ENCODE measurements at regions of chr2 and their contacts with region 1.

Region 1: GRCh38 chr2:172931918-172932520 is 143.6 kb upstream of the MAP3K20 start:
- DNase-seq: peak; percentile 50
- H3K4me3 ChIP-seq: no peak overlapping the region
- H3K27ac ChIP-seq: peak overlapping the region in 1 of 2 experiments; percentile 95; a peak in 2 of 4 replicates
- H3K4me1 ChIP-seq: peaks cover 0 to 32% of the 10 kb centered on the region in 2 experiments; a peak in 2 of 4 replicates
- H3K27me3 ChIP-seq: no peaks in the 10 kb centered on the region
- CTCF ChIP-seq: peak; percentile 78
- EP300 ChIP-seq: no peak
- RAD21 ChIP-seq: peak; percentile 87

Region 2: GRCh38 chr2:172768401-172768800 is 163.6 kb before region 1 on chr2:
- CTCF ChIA-PET with region 1: no interaction called
- POLR2A ChIA-PET with region 1: no interaction called
- DNase-seq: no peak
- H3K4me3 ChIP-seq: no peak overlapping the region
- H3K27ac ChIP-seq: no peak overlapping the region
- H3K4me1 ChIP-seq: no peaks in the 10 kb centered on the region
- H3K27me3 ChIP-seq: 0 out of 2 replicates have a peak, but pooled peaks cover 1% of the 10 kb centered on the region
- CTCF ChIP-seq: no peak
- EP300 ChIP-seq: no peak
- RAD21 ChIP-seq: no peak

Region 3: DNA sequence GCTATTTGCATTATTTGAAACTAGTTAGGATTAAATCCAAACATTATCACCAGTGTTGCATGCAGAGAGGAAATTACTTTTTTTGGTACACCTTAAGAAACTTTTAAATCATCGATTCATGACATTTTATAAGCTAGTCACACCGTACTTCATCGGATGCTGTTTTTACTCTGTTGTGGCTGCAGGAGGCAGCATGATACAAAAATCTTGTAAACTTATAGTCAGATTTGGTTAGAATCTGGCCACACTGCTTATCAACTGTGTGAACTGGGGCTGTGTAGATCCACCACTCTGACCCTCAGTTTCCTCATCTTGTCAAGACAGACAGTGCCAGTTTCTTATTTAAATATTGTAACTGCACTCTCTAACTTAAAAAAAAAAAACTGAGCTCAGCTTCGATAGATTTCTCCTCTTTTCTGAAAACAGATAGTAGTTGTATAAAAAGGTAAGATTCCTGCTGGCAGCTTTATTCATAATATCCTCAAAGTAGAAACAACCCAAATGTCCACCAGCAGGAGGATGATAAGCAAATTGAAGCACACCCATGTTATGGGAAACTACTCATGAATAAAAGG is 118.6 kb before region 1 on chr2:
- CTCF ChIA-PET with region 1: interaction called, 181 read pairs
- POLR2A ChIA-PET with region 1: interaction called, 4 read pairs
- DNase-seq: peak; percentile 33
- H3K4me3 ChIP-seq: no peak overlapping the region
- H3K27ac ChIP-seq: peak overlapping the region in 1 of 2 experiments; percentile 89; a peak in 2 of 4 replicates
- H3K4me1 ChIP-seq: peaks cover 0 to 32% of the 10 kb centered on the region in 2 experiments; a peak in 2 of 4 replicates
- H3K27me3 ChIP-seq: no peaks in the 10 kb centered on the region
- CTCF ChIP-seq: peak; percentile 63
- EP300 ChIP-seq: 0 out of 4 replicates have a peak, but pooled peaks of 1 of the 2 experiments have one; percentile 5
- RAD21 ChIP-seq: peak; percentile 92

Region 4: GRCh38 chr2:172855588-172855987 is 76.4 kb before region 1 on chr2:
- CTCF ChIA-PET with region 1: interaction called, 98 read pairs
- POLR2A ChIA-PET with region 1: interaction called, 4 read pairs
- DNase-seq: no peak
- H3K4me3 ChIP-seq: no peak overlapping the region
- H3K27ac ChIP-seq: no peak overlapping the region
- H3K4me1 ChIP-seq: peaks cover 1 to 20% of the 10 kb centered on the region in 2 experiments; a peak in 2 of 4 replicates
- H3K27me3 ChIP-seq: no peaks in the 10 kb centered on the region
- CTCF ChIP-seq: no peak
- EP300 ChIP-seq: no peak
- RAD21 ChIP-seq: no peak

Region 5: DNA sequence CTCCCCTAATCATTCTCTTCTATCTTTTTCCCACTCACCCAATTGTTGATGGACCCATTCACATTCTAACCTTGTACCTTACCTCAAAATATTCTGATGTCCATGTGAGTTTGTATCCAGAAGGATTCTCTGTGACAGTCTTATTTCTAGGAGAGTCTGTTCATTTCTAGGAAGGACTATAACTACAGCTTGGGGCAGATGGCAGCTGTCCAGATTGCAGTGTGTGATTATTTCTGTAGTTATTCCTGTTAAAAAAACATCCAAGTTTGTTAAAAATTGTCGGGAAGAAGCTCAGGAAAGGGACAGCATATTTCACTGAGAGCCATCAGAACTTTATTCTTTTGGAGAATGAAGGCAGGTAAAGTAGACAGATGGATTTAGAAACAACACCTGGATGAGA is 53.8 kb before region 1 on chr2:
- CTCF ChIA-PET with region 1: interaction called, 30 read pairs
- POLR2A ChIA-PET with region 1: no interaction called
- DNase-seq: no peak
- H3K4me3 ChIP-seq: no peak overlapping the region
- H3K27ac ChIP-seq: no peak overlapping the region; a peak in 1 of 4 replicates
- H3K4me1 ChIP-seq: peaks cover 0 to 4% of the 10 kb centered on the region in 2 experiments; a peak in 2 of 4 replicates
- H3K27me3 ChIP-seq: no peaks in the 10 kb centered on the region
- CTCF ChIP-seq: no peak
- EP300 ChIP-seq: no peak
- RAD21 ChIP-seq: no peak

Region 6: GRCh38 chr2:172905937-172906811 is 25.8 kb before region 1 on chr2:
- CTCF ChIA-PET with region 1: interaction called, 69 read pairs
- POLR2A ChIA-PET with region 1: no interaction called
- DNase-seq: peak; percentile 64
- H3K4me3 ChIP-seq: no peak overlapping the region
- H3K27ac ChIP-seq: peak overlapping the region in 1 of 2 experiments; percentile 95; a peak in 2 of 4 replicates
- H3K4me1 ChIP-seq: peaks cover 0 to 33% of the 10 kb centered on the region in 2 experiments; a peak in 2 of 4 replicates
- H3K27me3 ChIP-seq: no peaks in the 10 kb centered on the region
- CTCF ChIP-seq: no peak
- EP300 ChIP-seq: peak in 1 of 2 experiments; percentile 52; a peak in 2 of 4 replicates
- RAD21 ChIP-seq: peak; percentile 36

Region 7: GRCh38 chr2:172944022-172944793 is 12.2 kb after region 1 on chr2:
- CTCF ChIA-PET with region 1: interaction called, 14 read pairs
- POLR2A ChIA-PET with region 1: no interaction called
- DNase-seq: no peak
- H3K4me3 ChIP-seq: no peak overlapping the region
- H3K27ac ChIP-seq: no peak overlapping the region
- H3K4me1 ChIP-seq: peaks cover 0 to 2% of the 10 kb centered on the region in 2 experiments; a peak in 2 of 4 replicates
- H3K27me3 ChIP-seq: no peaks in the 10 kb centered on the region
- CTCF ChIP-seq: no peak
- EP300 ChIP-seq: no peak
- RAD21 ChIP-seq: no peak

Region 8: GRCh38 chr2:173021939-173022371 is 89.9 kb after region 1 on chr2:
- CTCF ChIA-PET with region 1: interaction called, 17 read pairs
- POLR2A ChIA-PET with region 1: no interaction called
- DNase-seq: peak; percentile 30
- H3K4me3 ChIP-seq: no peak overlapping the region
- H3K27ac ChIP-seq: no peak overlapping the region
- H3K4me1 ChIP-seq: peaks cover 0 to 2% of the 10 kb centered on the region in 2 experiments; a peak in 1 of 4 replicates
- H3K27me3 ChIP-seq: no peaks in the 10 kb centered on the region
- CTCF ChIP-seq: peak; percentile 54
- EP300 ChIP-seq: no peak
- RAD21 ChIP-seq: peak; percentile 41

Region 9: GRCh38 chr2:173048897-173049661 is 117.1 kb after region 1 on chr2:
- CTCF ChIA-PET with region 1: no interaction called
- POLR2A ChIA-PET with region 1: no interaction called
- DNase-seq: no peak
- H3K4me3 ChIP-seq: no peak overlapping the region
- H3K27ac ChIP-seq: peak overlapping the region; percentile 55 to 86; a peak in 3 of 4 replicates
- H3K4me1 ChIP-seq: peaks cover 2 to 34% of the 10 kb centered on the region in 2 experiments
- H3K27me3 ChIP-seq: no peaks in the 10 kb centered on the region
- CTCF ChIP-seq: no peak
- EP300 ChIP-seq: peak; percentile 37 to 75; a peak in 2 of 4 replicates
- RAD21 ChIP-seq: no peak

Region 10: DNA sequence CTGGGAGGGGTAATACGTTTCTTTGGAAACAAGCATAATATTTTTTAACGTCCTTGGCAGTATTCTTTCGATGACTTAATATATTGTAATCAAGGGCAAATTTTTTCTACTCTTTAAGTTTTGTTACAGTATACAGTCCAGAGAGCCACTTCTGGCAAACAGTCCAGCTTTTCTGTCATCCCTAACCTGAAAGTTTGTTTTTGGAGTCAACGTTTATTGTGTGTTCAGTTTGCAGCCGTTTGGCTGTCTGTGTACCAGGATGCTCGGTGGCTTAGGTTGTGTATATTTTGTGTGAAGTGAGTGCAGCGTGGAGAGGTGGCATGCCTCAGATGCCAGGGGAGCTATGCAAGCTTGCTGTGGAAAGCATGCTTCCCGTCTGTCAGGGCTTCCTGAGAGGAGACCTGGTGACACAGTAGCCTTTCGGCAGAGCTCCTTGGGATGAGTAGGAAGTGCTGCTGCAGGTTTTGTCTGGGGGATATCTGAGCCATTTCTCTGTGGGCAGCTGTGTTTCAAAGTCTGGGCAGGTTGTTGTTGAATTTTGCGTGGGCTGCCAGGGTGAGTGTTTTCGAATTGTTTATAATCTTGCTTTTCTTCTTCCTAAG is 158.4 kb after region 1 on chr2:
- CTCF ChIA-PET with region 1: no interaction called
- POLR2A ChIA-PET with region 1: no interaction called
- DNase-seq: no peak
- H3K4me3 ChIP-seq: no peak overlapping the region
- H3K27ac ChIP-seq: peak overlapping the region; percentile 22 to 55; a peak in 2 of 4 replicates
- H3K4me1 ChIP-seq: peaks cover 3 to 10% of the 10 kb centered on the region in 2 experiments; a peak in 3 of 4 replicates
- H3K27me3 ChIP-seq: no peaks in the 10 kb centered on the region
- CTCF ChIP-seq: no peak
- EP300 ChIP-seq: no peak
- RAD21 ChIP-seq: no peak

Region 11: DNA sequence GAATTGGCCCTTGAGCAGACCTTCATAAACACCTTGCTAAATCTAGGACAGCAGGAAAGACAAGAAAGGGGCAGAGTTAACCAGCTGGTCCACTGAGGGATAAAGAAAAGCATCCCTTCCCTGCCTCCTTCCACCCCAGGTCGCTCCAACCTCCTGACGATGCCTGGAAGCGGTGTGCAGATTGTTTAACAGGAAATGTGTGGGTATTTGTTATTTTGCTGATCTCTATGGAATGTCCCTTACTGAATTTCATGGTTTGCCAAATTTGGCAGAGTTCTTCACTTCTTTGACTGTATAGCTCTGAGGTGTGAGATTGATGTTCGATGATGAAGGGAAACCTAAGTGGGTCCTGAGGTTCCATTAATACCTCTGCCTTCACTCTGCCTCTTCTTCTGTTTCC is 216.5 kb after region 1 on chr2:
- CTCF ChIA-PET with region 1: no interaction called
- POLR2A ChIA-PET with region 1: no interaction called
- DNase-seq: no peak
- H3K4me3 ChIP-seq: no peak overlapping the region
- H3K27ac ChIP-seq: no peak overlapping the region
- H3K4me1 ChIP-seq: peaks cover 2 to 39% of the 10 kb centered on the region in 2 experiments
- H3K27me3 ChIP-seq: no peaks in the 10 kb centered on the region
- CTCF ChIP-seq: no peak
- EP300 ChIP-seq: no peak
- RAD21 ChIP-seq: no peak

Measured in SK-N-SH (cell line).